Dendritic cell treated with granulocyte-macrophage colony-stimulating factor and Interleukin-4, amounts not matched to agents 40 ng/mL and 50 ng/mL, for 4 days (primary cell): ENCODE measurements at regions of chr19 and their contacts with region 1.

Region 1: DNA sequence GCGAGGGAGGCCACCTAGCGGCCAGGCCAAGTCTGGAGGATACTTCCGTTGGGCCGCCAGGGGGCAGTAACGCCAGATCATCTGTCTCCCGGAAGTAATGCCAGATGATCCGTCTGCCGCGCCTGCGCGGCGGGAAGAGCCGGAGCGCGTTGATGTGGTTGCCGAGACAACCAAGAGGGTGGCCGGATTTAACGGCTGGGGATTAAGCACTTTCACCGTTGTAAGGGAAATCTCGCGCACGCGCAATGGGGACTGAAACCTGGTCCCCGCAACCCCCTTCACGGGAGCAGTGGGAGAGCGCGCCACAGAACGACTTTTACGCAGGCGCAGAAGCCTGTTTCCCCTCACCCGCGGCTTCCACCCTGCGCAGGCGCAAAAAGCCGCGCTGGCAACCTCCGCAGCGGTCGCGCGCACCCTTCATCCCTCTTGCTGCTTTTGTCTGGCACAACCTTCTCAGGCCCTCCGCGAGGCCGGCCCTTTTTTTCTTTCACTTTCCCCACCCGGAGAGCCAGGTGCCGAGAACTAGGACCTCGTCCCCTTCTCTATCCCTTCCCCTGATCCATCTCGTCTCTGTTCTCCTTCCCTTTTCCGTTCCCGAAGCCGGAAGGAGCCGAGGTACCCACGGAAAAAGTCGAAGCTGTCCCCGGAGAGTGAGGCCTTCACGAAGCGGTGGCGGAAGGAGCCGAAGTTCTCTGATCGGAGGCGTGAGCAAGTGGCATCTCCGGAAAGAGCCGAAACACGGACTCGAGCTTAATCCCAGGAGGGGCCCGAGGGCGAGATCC is 886 bp upstream of the U2AF2 start:
- H3K4me3 Mint-ChIP-seq: peak overlapping the region; percentile 90
- H3K27ac Mint-ChIP-seq: peak overlapping the region; percentile 96
- H3K4me1 Mint-ChIP-seq: peaks cover 56% of the 10 kb centered on the region
- H3K27me3 Mint-ChIP-seq: no peaks in the 10 kb centered on the region

Region 2: DNA sequence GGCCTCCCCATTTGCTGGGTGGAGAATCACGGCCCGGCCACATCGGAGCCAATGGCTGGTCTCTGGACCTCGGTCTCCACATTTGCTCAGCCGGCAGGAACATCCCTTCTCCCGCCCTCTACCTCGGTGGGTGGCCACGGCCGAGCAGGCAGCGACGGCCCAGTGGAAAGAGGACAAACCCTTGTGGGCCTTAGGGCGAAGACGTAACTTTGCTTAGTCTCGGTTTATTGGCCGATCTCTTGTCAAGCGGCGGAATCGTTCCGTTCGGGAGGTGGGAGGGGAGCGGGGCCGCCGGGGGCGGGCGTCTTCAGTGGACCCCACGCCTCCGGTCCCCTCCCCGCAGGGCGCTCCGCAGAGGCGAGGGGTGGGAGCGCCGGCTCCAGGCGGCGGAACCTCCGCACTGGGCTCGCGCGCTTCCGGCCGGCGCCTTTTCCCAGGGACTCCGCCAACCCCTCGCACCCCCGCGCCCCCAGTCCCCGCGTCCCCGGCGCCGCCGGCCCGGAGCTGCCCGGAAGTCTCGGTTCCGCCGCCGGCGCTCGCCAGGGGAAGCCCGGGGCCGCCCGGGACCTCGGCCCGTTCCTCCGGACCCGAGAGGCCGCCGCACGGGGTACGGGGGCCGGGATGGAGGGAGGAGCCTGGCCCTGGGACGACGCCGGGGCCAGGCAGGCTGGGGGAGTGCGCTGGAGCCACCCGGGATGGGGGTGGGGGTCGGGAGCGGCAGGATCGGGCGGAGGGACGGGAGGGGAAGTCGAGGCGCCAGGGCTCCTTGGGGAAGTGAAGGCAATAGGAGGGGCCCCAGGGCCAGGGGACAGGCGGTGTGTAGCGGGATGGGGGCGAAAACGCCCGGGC is 13.1 kb before region 1 on chr19 and contains the start of gene ZNF580:
- intact Hi-C with region 1: loop called (anchors 2 kb)
- H3K4me3 Mint-ChIP-seq: peak within 1 kb of the TSS; percentile 96
- H3K27ac Mint-ChIP-seq: peak within 1 kb of the TSS; percentile 89
- H3K4me1 Mint-ChIP-seq: peaks cover 87% of the 10 kb centered on the region
- H3K27me3 Mint-ChIP-seq: no peaks in the 10 kb centered on the region

Region 3: DNA sequence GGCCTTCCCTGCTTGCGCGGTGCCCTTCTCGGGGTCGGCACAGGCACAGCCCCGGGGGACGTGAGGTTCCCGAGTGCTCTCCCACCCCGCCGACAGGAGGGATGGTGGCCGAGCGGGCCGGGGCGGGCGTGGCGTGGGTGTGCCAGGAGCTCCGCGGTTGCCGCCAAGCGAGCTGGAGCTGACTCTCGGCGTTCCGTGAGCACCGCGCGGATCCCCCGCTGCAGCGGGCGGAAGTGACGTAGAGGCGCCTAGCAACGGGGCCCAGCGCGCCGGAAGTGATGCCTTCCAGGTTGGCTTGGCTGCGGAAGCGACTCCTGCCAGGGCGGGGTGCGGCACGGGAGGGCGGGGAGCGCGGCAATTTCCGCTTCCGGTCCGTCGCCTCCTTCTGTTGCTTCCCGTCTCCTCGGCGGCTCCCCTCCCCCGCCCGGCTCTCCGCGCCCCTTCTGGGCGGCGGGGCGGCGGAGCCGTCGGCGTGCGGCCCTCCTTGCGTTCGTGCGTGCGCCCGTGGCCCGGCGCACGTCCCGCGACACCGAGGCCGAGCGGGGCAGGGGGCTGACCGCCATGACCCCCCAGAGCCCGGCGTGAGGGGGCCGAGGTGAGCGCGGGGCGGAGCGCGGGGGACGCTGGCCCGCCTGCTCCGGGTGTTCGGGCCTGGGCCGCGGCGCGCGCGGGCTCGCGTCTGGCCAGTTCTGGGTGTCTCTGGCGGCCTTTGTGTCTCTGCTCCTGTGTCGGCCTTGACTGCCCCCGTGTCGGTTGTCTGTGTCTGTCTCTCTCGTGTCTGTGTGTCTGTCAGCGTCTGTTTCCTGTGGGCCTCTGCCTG is 21.1 kb after region 1 on chr19 and contains the start of gene EPN1:
- intact Hi-C with region 1: loop called (anchors 2 kb)
- H3K4me3 Mint-ChIP-seq: peak within 1 kb of the TSS; percentile 95
- H3K27ac Mint-ChIP-seq: peak within 1 kb of the TSS; percentile 94
- H3K4me1 Mint-ChIP-seq: peaks cover 73% of the 10 kb centered on the region
- H3K27me3 Mint-ChIP-seq: no peaks in the 10 kb centered on the region